H1 (cell line): ENCODE measurements at regions of chr11 and their contacts with region 1.

Region 1: GRCh38 chr11:102666331-102666957 is 39.1 kb downstream of the MMP27 start:
- DNase-seq: no peak
- H3K4me3 ChIP-seq: no peak overlapping the region
- H3K27ac ChIP-seq: no peak overlapping the region
- H3K4me1 ChIP-seq: peaks cover 0 to 3% (median 0%) of the 10 kb centered on the region in 4 experiments; a peak in 1 of 7 replicates
- H3K27me3 ChIP-seq: no peaks in the 10 kb centered on the region
- CTCF ChIP-seq: peak; percentile 8 to 84 (median 72)
- EP300 ChIP-seq: no peak
- POLR2A ChIP-seq: no peak
- RAD21 ChIP-seq: peak; percentile 91 to 94

Region 2: DNA sequence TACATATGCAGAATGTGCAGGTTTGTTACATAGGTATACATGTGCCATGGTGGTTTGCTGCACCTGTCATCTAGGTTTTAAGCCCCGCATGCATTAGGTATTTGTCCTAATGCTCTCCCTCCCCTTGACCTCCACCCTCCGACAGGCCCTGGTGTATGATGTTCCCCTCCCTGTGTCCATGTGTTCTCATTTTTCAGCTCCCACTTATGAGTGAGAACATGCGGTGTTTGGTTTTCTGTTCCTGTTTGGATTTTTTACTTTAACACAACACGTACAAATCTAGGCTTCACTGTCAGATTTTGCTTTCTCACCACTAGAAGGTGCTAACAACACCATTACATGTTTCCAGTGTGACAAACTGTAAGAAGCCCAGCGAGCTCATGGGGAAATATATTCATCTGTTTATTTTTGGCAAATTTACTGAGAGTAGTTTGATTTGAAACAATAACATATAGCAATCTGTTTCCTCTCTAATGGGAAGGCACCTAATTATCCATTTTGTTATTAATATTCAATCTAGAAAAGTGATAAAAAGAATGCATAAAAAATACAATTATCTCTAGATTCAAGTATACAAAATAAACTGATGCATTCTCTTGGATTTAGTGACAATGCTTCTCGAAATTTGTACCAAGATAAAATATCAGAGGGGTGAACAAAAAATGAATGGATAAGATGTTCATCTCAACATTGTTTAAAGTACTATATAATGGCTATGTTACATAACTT is 372.4 kb before region 1 on chr11:
- CTCF ChIA-PET with region 1: interaction called, 12 read pairs
- POLR2A ChIA-PET with region 1: no interaction called
- DNase-seq: no peak
- H3K4me3 ChIP-seq: no peak overlapping the region
- H3K27ac ChIP-seq: no peak overlapping the region
- H3K4me1 ChIP-seq: peaks cover 0 to 5% (median 0%) of the 10 kb centered on the region in 4 experiments; a peak in 2 of 7 replicates
- H3K27me3 ChIP-seq: no peaks in the 10 kb centered on the region
- CTCF ChIP-seq: peak in 2 of 3 experiments; percentile 46 to 73; a peak in 2 of 4 replicates
- EP300 ChIP-seq: no peak
- POLR2A ChIP-seq: no peak
- RAD21 ChIP-seq: peak; percentile 52 to 55

Region 3: GRCh38 chr11:102390667-102391465 is 275.6 kb before region 1 on chr11:
- CTCF ChIA-PET with region 1: interaction called, 32 read pairs
- POLR2A ChIA-PET with region 1: no interaction called
- DNase-seq: peak; percentile 43 to 69
- H3K4me3 ChIP-seq: no peak overlapping the region
- H3K27ac ChIP-seq: no peak overlapping the region
- H3K4me1 ChIP-seq: no peaks in the 10 kb centered on the region
- H3K27me3 ChIP-seq: no peaks in the 10 kb centered on the region
- CTCF ChIP-seq: peak; percentile 86 to 93 (median 92)
- EP300 ChIP-seq: no peak
- POLR2A ChIP-seq: no peak
- RAD21 ChIP-seq: peak; percentile 72 to 80

Region 4: GRCh38 chr11:102513869-102514268 is 152.6 kb before region 1 on chr11:
- CTCF ChIA-PET with region 1: interaction called, 10 read pairs
- POLR2A ChIA-PET with region 1: no interaction called
- DNase-seq: no peak
- H3K4me3 ChIP-seq: no peak overlapping the region
- H3K27ac ChIP-seq: no peak overlapping the region
- H3K4me1 ChIP-seq: no peaks in the 10 kb centered on the region
- H3K27me3 ChIP-seq: no peaks in the 10 kb centered on the region
- CTCF ChIP-seq: no peak
- EP300 ChIP-seq: no peak
- POLR2A ChIP-seq: no peak
- RAD21 ChIP-seq: no peak

Region 5: GRCh38 chr11:102592634-102593581 is 73.5 kb before region 1 on chr11:
- CTCF ChIA-PET with region 1: interaction called, 12 read pairs
- POLR2A ChIA-PET with region 1: no interaction called
- DNase-seq: no peak
- H3K4me3 ChIP-seq: no peak overlapping the region
- H3K27ac ChIP-seq: no peak overlapping the region
- H3K4me1 ChIP-seq: no peaks in the 10 kb centered on the region
- H3K27me3 ChIP-seq: no peaks in the 10 kb centered on the region
- CTCF ChIP-seq: peak in 2 of 3 experiments; percentile 47 to 77; a peak in 2 of 4 replicates
- EP300 ChIP-seq: no peak
- POLR2A ChIP-seq: no peak
- RAD21 ChIP-seq: peak; percentile 33 to 44; a peak in 3 of 4 replicates

Region 6: GRCh38 chr11:102614485-102614884 is 52.0 kb before region 1 on chr11:
- CTCF ChIA-PET with region 1: interaction called, 54 read pairs
- POLR2A ChIA-PET with region 1: no interaction called
- DNase-seq: no peak
- H3K4me3 ChIP-seq: no peak overlapping the region
- H3K27ac ChIP-seq: no peak overlapping the region
- H3K4me1 ChIP-seq: peaks cover 4 to 18% (median 12%) of the 10 kb centered on the region in 4 experiments
- H3K27me3 ChIP-seq: no peaks in the 10 kb centered on the region
- CTCF ChIP-seq: no peak
- EP300 ChIP-seq: no peak
- POLR2A ChIP-seq: no peak
- RAD21 ChIP-seq: peak; percentile 14 to 27; a peak in 2 of 4 replicates

Region 7: GRCh38 chr11:102724904-102725500 is 58.6 kb after region 1 on chr11 and contains the start of gene MMP8:
- CTCF ChIA-PET with region 1: no interaction called
- POLR2A ChIA-PET with region 1: no interaction called
- DNase-seq: no peak
- H3K4me3 ChIP-seq: no peak within 1 kb of the TSS
- H3K27ac ChIP-seq: no peak within 1 kb of the TSS
- H3K4me1 ChIP-seq: no peaks in the 10 kb centered on the region
- H3K27me3 ChIP-seq: peaks cover 0 to 1% (median 0%) of the 10 kb centered on the region in 4 experiments; a peak in 1 of 7 replicates
- CTCF ChIP-seq: no peak
- EP300 ChIP-seq: no peak
- POLR2A ChIP-seq: no peak
- RAD21 ChIP-seq: no peak
- total RNA-seq, gene MMP8: not detected in 2 replicates

Region 8: GRCh38 chr11:102757823-102758549 is 91.5 kb after region 1 on chr11:
- CTCF ChIA-PET with region 1: no interaction called
- POLR2A ChIA-PET with region 1: no interaction called
- DNase-seq: no peak
- H3K4me3 ChIP-seq: no peak overlapping the region
- H3K27ac ChIP-seq: no peak overlapping the region
- H3K4me1 ChIP-seq: peaks cover 0 to 8% (median 4%) of the 10 kb centered on the region in 4 experiments; a peak in 2 of 7 replicates
- H3K27me3 ChIP-seq: no peaks in the 10 kb centered on the region
- CTCF ChIP-seq: no peak
- EP300 ChIP-seq: no peak
- POLR2A ChIP-seq: no peak
- RAD21 ChIP-seq: no peak

Region 9: DNA sequence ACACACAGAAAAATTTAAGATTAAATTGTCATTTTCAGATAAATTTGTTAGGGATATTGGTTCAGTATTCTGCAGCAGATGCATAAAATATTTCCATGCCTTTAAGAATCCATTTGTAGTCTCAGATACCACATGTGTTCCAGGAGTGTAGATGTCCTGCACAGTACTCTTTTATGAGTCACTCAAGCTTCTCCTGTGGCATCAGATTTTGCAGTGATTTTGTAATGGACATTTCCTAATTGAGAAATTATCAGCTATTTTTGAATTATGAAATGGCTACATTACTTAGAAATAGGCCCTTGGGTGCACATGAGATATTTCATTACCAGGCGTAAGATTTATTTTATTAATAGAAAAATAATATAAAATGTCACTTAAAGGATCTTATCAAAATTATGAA is 158.1 kb after region 1 on chr11:
- CTCF ChIA-PET with region 1: no interaction called
- POLR2A ChIA-PET with region 1: no interaction called
- DNase-seq: no peak
- H3K4me3 ChIP-seq: no peak overlapping the region
- H3K27ac ChIP-seq: no peak overlapping the region
- H3K4me1 ChIP-seq: no peaks in the 10 kb centered on the region
- H3K27me3 ChIP-seq: no peaks in the 10 kb centered on the region
- CTCF ChIP-seq: no peak
- EP300 ChIP-seq: no peak
- POLR2A ChIP-seq: no peak
- RAD21 ChIP-seq: no peak